Prostate gland (tissue), 2 donors: ENCODE measurements at regions of chr9 and their contacts with region 1.

Region 1: GRCh38 chr9:124126571-124127289 is 115.2 kb downstream of the LHX2 start:
- DNase-seq: peak; percentile 70
- H3K4me3 ChIP-seq: no peak overlapping the region
- H3K27ac ChIP-seq: no peak overlapping the region
- H3K4me1 ChIP-seq: no peaks in the 10 kb centered on the region
- H3K27me3 ChIP-seq: peaks cover 2% of the 10 kb centered on the region
- CTCF ChIP-seq: peak; percentile 93 to 99 (median 97)
- POLR2A ChIP-seq: no peak

Region 2: DNA sequence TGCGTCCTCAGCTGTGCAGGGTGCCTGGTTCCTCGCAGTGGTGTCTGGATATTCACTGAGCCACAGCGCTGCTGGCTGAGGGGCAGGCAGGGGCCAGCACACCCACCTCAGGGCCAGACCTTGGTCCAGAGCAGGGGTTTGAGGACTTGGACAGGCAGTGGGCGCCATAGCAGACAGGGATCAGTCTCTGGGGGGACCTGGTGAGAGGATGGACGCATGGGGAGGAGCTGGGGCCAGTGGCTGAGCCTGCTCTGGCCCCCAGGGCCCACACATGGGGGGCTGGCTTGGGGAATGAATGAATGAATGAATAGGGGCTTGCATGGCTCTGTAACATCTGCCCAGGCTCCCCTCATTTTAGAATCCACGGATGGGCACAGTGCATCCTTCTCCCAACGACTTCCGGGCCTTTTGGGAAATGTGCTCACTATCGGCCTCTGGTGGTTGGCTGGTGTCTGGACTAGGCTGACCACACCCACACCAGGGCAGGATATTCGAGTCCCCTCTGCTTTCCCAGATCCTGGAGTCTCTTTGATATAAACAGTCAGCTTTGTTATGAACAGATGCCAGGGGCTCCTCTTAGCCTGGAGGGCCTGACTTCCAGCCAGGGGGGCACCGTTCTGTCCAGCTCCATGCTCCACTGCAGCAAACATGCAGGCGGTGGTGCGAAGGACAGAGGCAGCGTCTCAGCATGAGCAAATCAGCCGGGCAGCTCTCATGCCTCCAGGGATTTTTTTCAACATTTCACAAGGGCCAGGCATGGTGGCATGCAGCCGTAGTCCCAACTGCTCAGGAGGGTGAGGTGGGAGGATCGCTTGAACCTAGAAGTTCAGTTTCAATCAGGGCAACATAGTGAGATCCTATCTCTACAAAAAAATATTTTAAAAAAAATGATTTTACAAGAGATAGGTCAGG is 193.6 kb after region 1 on chr9:
- intact Hi-C with region 1: loop called (anchors 1 kb)
- DNase-seq: peak; percentile 64
- H3K4me3 ChIP-seq: no peak overlapping the region
- H3K27ac ChIP-seq: no peak overlapping the region
- H3K4me1 ChIP-seq: no peaks in the 10 kb centered on the region
- H3K27me3 ChIP-seq: no peaks in the 10 kb centered on the region
- CTCF ChIP-seq: peak; percentile 80 to 90 (median 84)
- POLR2A ChIP-seq: no peak

Region 3: GRCh38 chr9:124392871-124393460 is 266.2 kb after region 1 on chr9:
- intact Hi-C with region 1: loop called (anchors 10 kb)
- DNase-seq: no peak
- H3K4me3 ChIP-seq: no peak overlapping the region
- H3K27ac ChIP-seq: no peak overlapping the region
- H3K4me1 ChIP-seq: no peaks in the 10 kb centered on the region
- H3K27me3 ChIP-seq: no peaks in the 10 kb centered on the region
- CTCF ChIP-seq: peak in 1 of 4 experiments; percentile 45
- POLR2A ChIP-seq: no peak

Region 4: GRCh38 chr9:124482431-124483031 is 355.8 kb after region 1 on chr9:
- intact Hi-C with region 1: no loop called
- DNase-seq: no peak
- H3K4me3 ChIP-seq: no peak overlapping the region
- H3K27ac ChIP-seq: no peak overlapping the region
- H3K4me1 ChIP-seq: no peaks in the 10 kb centered on the region
- H3K27me3 ChIP-seq: peaks cover 18% of the 10 kb centered on the region
- CTCF ChIP-seq: no peak
- POLR2A ChIP-seq: no peak

Region 5: GRCh38 chr9:124537926-124538325 is 411.2 kb after region 1 on chr9:
- intact Hi-C with region 1: loop called (anchors 5 kb)
- DNase-seq: no peak
- H3K4me3 ChIP-seq: no peak overlapping the region
- H3K27ac ChIP-seq: no peak overlapping the region
- H3K4me1 ChIP-seq: no peaks in the 10 kb centered on the region
- H3K27me3 ChIP-seq: no peaks in the 10 kb centered on the region
- CTCF ChIP-seq: no peak
- POLR2A ChIP-seq: no peak